ENCODE measurements at regions of chr14 and their contacts with region 1.

Region 1: GRCh38 chr14:49620182-49621113 is at the starts of genes MGAT2 and RPL36AL:
- DNase-seq: peak; percentile 91
- H3K4me3 ChIP-seq: peak within 1 kb of the TSS; percentile 95
- H3K27me3 ChIP-seq: no peaks in the 10 kb centered on the region
- CTCF ChIP-seq: peak; percentile 57
- polyA plus RNA-seq, gene MGAT2: 24.1 and 35.2 TPM in 2 replicates
- polyA plus RNA-seq, gene RPL36AL: 87.9 and 203 TPM in 2 replicates

Region 2: DNA sequence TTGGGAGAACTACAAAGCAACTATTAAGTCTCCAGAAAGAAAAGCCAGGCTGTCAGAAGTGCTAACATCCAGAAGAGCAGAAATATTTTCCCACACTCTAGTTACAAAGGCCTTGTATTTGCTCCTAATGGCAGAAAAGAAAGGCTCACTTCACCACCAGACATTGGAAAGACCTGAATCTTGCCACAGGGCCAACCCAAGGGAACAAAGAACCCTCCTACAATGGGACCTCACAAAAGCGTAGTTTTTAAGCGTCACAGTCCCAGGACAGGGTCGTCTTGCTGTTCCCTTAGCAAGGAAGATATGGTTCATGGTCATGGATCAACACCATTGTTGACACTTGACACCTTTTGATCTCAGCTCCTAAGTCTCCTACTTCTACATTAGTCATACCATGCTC is 153.4 kb before region 1 on chr14:
- CTCF ChIA-PET with region 1: no interaction called
- POLR2A ChIA-PET with region 1: no interaction called
- DNase-seq: no peak
- H3K4me3 ChIP-seq: no peak overlapping the region
- H3K27me3 ChIP-seq: peaks cover 1% of the 10 kb centered on the region; the same call in 1 of the 2 replicates
- CTCF ChIP-seq: no peak

Region 3: GRCh38 chr14:49607583-49607982 is 12.9 kb before region 1 on chr14:
- CTCF ChIA-PET with region 1: interaction called, 4 read pairs
- POLR2A ChIA-PET with region 1: interaction called, 16 read pairs
- DNase-seq: no peak
- H3K4me3 ChIP-seq: no peak overlapping the region
- H3K27me3 ChIP-seq: no peaks in the 10 kb centered on the region
- CTCF ChIP-seq: no peak

Region 4: DNA sequence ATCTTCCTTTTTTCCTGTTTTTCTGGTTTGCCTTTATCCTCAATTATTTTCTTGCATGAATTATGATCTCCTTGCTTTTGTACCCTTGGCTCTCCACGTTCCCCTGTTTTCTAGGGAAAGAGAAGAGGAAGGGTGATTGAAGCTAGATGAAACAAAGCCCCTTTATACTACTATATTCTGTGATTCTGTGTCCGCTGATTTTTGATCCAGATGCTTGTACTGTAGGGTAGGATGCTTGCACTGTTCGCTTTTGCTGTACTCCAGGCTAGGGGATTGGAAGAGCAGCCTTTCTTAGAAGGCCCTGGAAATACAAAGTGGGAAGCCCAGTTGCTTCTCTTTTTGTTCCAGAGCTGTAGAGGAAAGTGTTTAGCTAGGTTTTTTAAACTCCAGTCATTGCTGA is 112.4 kb after region 1 on chr14:
- CTCF ChIA-PET with region 1: no interaction called
- POLR2A ChIA-PET with region 1: no interaction called
- DNase-seq: no peak
- H3K4me3 ChIP-seq: no peak overlapping the region
- H3K27me3 ChIP-seq: no peaks in the 10 kb centered on the region
- CTCF ChIP-seq: no peak

Region 5: GRCh38 chr14:50061664-50062437 is 441.4 kb after region 1 on chr14:
- CTCF ChIA-PET with region 1: no interaction called
- POLR2A ChIA-PET with region 1: no interaction called
- DNase-seq: no peak
- H3K4me3 ChIP-seq: no peak overlapping the region
- H3K27me3 ChIP-seq: no peaks in the 10 kb centered on the region
- CTCF ChIP-seq: no peak

Measured in BJ (cell line).